ENCODE measurements at regions of chr14 and their contacts with region 1.

Region 1: DNA sequence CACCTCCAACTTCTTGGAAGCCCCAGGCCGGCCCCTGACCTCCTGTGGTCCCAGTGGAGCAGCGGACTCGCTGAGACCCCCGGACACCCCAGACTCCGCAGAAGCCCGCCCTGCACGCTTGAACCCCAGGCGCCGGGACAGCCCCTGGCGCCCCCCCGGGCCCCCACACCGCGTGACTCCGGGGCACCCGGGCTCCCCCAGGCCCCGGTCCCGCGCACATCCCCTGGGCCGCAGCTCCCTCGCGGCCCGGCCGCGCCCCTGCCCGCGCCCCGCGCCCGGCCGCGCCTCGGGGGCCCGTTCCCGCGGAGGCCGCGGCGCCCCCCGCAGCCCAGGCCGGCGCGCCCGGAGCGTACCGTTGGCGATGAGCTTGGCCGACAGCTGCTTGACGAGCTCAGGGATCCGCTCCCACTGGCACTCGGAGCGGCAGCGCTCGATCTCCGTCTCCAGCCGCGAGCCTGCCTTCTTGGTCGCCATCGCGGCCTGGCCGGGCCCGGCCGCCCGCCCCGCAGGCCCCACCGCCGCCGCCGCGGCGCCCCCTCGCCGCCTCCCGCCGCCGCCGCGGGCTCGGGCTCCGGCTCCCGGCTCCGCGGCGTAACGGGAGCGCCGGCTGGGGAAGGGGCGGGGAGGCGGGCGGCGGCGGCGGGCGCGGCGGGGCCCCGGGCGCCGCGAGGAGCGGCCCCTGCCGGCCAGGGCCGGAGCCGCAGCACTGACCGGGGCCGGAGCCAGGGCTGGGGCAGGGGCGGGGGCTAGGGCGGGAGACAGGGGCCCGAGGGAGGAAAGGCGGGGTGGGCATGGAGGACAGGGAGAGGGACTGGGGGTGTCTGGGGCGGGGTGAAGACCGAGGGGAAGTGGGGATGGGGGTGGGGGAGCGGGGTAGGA is at the start of gene TTC7B:
- DNase-seq: peak in 1 of 2 donors; percentile 28
- ATAC-seq: peak; percentile 87 to 91
- H3K4me3 ChIP-seq: peak within 1 kb of the TSS; percentile 73 to 81 (median 76)
- H3K27ac ChIP-seq: peak within 1 kb of the TSS; percentile 52 to 70 (median 65)
- H3K4me1 ChIP-seq: peaks cover 25 to 35% of the 10 kb centered on the region in 2 donors
- H3K27me3 ChIP-seq: no peaks in the 10 kb centered on the region
- CTCF ChIP-seq: peak in 2 of 5 experiments; percentile 40 to 49
- POLR2A ChIP-seq: no peak
- total RNA-seq, gene TTC7B: 35.0 to 78.7 (median 36.8) TPM

Region 2: DNA sequence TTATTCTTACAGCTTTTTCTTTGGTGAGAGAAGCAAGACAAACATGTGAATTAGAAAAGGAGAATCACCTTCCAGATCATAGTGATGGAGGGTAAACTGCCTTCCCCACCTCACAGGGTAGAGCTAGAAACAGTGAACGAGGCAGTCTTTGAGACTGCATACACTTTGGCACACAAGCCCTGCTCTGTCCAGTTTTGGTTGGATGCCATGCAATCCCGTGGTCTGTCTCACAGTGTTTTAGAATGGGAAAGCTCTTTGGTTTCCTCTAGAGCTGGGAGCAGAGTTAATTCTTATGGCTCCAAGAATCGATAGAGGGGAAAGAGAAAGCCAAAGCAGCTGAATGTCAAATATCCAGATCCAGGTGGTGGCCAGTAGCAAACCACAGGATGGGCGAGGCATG is 838.4 kb before region 1 on chr14:
- in situ Hi-C with region 1: loop called in 1 of 4 experiments (anchors 25 kb)
- intact Hi-C with region 1: no loop called
- DNase-seq: no peak
- ATAC-seq: no peak
- H3K4me3 ChIP-seq: no peak overlapping the region
- H3K27ac ChIP-seq: no peak overlapping the region
- H3K4me1 ChIP-seq: peaks cover 0 to 5% of the 10 kb centered on the region in 2 donors
- H3K27me3 ChIP-seq: no peaks in the 10 kb centered on the region
- CTCF ChIP-seq: no peak
- POLR2A ChIP-seq: no peak

Region 3: GRCh38 chr14:90733139-90733808 is 82.8 kb before region 1 on chr14:
- in situ Hi-C with region 1: no loop called
- intact Hi-C with region 1: no loop called
- DNase-seq: peak; percentile 79 to 82
- ATAC-seq: peak; percentile 93 to 98
- H3K4me3 ChIP-seq: no peak overlapping the region
- H3K27ac ChIP-seq: peak overlapping the region; percentile 60 to 85 (median 74)
- H3K4me1 ChIP-seq: peaks cover 5 to 14% of the 10 kb centered on the region in 2 donors
- H3K27me3 ChIP-seq: no peaks in the 10 kb centered on the region
- CTCF ChIP-seq: no peak
- POLR2A ChIP-seq: no peak

Region 4: GRCh38 chr14:90850487-90850886 is 34.4 kb after region 1 on chr14:
- in situ Hi-C with region 1: no loop called
- intact Hi-C with region 1: loop called (anchors 1 kb)
- DNase-seq: no peak
- ATAC-seq: peak; percentile 79 to 83
- H3K4me3 ChIP-seq: peak overlapping the region in 3 of 4 donors; percentile 14 to 31 (median 17)
- H3K27ac ChIP-seq: peak overlapping the region in 3 of 4 donors; percentile 60 to 66 (median 62)
- H3K4me1 ChIP-seq: peaks cover 5 to 17% of the 10 kb centered on the region in 2 donors
- H3K27me3 ChIP-seq: no peaks in the 10 kb centered on the region
- CTCF ChIP-seq: no peak
- POLR2A ChIP-seq: no peak

Measured in gastrocnemius medialis (tissue), 4 donors.